Thyroid gland (tissue), 4 donors: ENCODE measurements at regions of chr10 and their contacts with region 1.

Region 1: DNA sequence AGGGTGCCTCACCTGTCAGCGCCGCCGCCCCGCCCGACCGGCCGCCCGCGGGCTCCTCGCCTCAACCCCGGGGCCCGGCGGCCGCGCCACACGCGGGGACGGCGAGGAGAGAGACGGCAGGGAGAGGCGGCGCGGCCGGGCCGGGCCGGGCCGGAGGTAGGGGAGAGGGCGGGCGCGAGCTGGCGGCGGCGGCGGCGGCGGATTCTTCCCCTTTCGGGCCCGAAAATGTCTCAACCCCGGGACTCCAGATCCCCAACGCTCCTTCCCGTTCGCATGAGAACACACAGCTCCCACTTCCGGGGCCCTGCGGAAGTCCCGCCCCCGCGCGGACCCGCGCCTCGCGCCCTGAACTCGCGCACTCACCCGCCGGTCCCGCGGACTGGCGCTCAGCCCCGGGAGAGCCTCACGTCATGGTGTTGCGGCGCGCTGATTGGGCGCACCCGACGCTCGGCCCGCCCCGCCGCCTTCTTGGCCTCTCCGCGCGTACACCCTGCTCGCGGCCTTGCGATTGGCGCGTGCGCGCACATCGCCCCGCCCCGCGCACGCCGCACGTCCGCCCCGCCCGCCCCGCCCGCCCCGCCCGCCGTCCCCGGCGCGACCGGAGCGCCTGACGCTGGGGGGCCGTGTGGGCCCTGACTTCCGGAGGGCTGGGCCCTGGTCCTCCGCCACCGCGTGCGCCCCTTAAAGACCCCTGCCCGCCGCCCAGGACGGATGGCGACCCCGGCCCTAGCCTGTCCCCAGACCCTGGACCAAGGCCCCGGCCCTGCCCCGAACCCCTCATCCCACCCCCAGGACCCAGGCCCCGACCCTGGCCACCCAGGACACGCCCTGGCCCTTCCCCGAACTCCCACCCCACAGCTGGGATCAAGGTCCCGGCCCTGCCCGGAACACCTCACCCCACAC is at the start of gene LARP4B:
- DNase-seq: peak; percentile 97 to 98
- H3K4me3 ChIP-seq: peak within 1 kb of the TSS in 2 of 3 donors; percentile 60 to 84
- H3K27ac ChIP-seq: peak within 1 kb of the TSS; percentile 94 to 98 (median 96)
- H3K4me1 ChIP-seq: peaks cover 25 to 39% of the 10 kb centered on the region in 2 donors
- H3K27me3 ChIP-seq: no peaks in the 10 kb centered on the region
- CTCF ChIP-seq: no peak
- POLR2A ChIP-seq: peak in 1 of 2 donors; percentile 81
- total RNA-seq, gene LARP4B: 68.6 to 113 (median 87.4) TPM

Region 2: GRCh38 chr10:689433-690371 is 242.0 kb before region 1 on chr10 and contains the start of gene DIP2C:
- intact Hi-C with region 1: loop called (anchors 10 kb)
- DNase-seq: peak; percentile 71 to 72
- H3K4me3 ChIP-seq: peak within 1 kb of the TSS; percentile 35 to 69 (median 59)
- H3K27ac ChIP-seq: peak within 1 kb of the TSS; percentile 20 to 88 (median 77)
- H3K4me1 ChIP-seq: peaks cover 9 to 12% of the 10 kb centered on the region in 2 donors
- H3K27me3 ChIP-seq: no peaks in the 10 kb centered on the region
- CTCF ChIP-seq: no peak
- POLR2A ChIP-seq: peak in 1 of 2 donors; percentile 58
- total RNA-seq, gene DIP2C: 11.4 to 14.6 (median 12.3) TPM

Region 3: DNA sequence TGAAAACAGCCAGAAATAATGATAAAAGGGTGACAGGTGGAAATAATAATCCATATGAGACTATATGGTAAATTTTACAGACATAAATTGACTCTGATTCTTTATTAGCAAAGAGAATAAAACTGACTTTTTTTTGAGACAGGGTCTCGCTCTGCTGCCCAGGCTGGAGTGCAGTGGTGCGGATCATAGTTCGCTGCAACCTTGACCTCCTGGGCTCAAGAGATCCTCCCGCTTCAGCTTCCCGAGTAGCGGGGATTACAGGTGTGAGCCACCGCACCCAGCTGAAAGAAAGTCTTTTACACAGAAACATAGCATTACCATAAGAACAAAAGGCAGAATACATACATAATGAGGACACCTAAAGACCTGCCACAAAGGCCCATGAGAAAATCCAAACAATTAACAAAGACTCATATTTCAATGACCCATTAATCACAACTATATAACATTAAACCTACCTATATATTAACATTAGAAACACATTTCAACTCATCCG is 190.7 kb before region 1 on chr10:
- intact Hi-C with region 1: no loop called
- DNase-seq: no peak
- H3K4me3 ChIP-seq: no peak overlapping the region
- H3K27ac ChIP-seq: no peak overlapping the region
- H3K4me1 ChIP-seq: no peaks in the 10 kb centered on the region
- H3K27me3 ChIP-seq: no peaks in the 10 kb centered on the region
- CTCF ChIP-seq: no peak
- POLR2A ChIP-seq: no peak

Region 4: GRCh38 chr10:987870-988666 is 56.4 kb after region 1 on chr10 and contains the start of gene GTPBP4:
- intact Hi-C with region 1: loop called (anchors 5 kb)
- DNase-seq: peak; percentile 99
- H3K4me3 ChIP-seq: peak within 1 kb of the TSS; percentile 58 to 87 (median 80)
- H3K27ac ChIP-seq: peak within 1 kb of the TSS; percentile 73 to 87 (median 85)
- H3K4me1 ChIP-seq: peaks cover 28 to 36% of the 10 kb centered on the region in 2 donors
- H3K27me3 ChIP-seq: no peaks in the 10 kb centered on the region
- CTCF ChIP-seq: peak in 1 of 6 experiments; percentile 33
- POLR2A ChIP-seq: peak in 1 of 2 donors; percentile 81
- total RNA-seq, gene GTPBP4: 12.0 to 24.6 (median 19.8) TPM

Region 5: DNA sequence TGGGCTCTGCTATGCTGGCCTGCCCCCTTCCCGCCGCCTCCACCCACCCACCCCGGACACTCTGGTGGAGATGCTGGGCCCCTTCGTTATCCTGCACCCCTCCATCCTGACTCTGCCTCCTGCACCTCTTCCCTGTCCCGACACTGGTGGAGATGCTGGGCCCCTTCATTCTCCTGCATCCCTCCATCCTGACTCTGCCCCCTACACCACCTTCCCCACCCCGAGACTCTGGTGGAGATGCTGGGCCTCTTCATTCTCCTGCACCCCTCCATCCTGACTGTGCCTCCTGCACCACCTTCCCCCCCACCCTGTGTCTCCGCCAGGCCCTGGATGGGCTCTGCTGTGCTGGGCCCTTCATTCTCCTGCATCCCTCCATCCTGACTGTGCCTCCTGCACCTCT is 79.0 kb after region 1 on chr10:
- intact Hi-C with region 1: no loop called
- DNase-seq: no peak
- H3K4me3 ChIP-seq: no peak overlapping the region
- H3K27ac ChIP-seq: no peak overlapping the region
- H3K4me1 ChIP-seq: no peaks in the 10 kb centered on the region
- H3K27me3 ChIP-seq: no peaks in the 10 kb centered on the region
- CTCF ChIP-seq: no peak
- POLR2A ChIP-seq: no peak

Region 6: GRCh38 chr10:1043532-1043995 is 111.9 kb after region 1 on chr10:
- intact Hi-C with region 1: loop called (anchors 5 kb)
- DNase-seq: no peak
- H3K4me3 ChIP-seq: no peak overlapping the region
- H3K27ac ChIP-seq: peak overlapping the region; percentile 9 to 57 (median 41)
- H3K4me1 ChIP-seq: peaks cover 6 to 7% of the 10 kb centered on the region in 2 donors
- H3K27me3 ChIP-seq: no peaks in the 10 kb centered on the region
- CTCF ChIP-seq: no peak
- POLR2A ChIP-seq: peak in 1 of 2 donors; percentile 20